Caco-2 (cell line): ENCODE measurements at regions of chr6 and their contacts with region 1.

Region 1: GRCh38 chr6:50655848-50656453 is 57.4 kb upstream of the TFAP2D start:
- DNase-seq: peak in 1 of 2 experiments; percentile 18
- H3K4me3 ChIP-seq: no peak overlapping the region
- H3K4me3 Mint-ChIP-seq: no peak overlapping the region
- H3K27ac Mint-ChIP-seq: no peak overlapping the region
- H3K4me1 ChIP-seq: no peaks in the 10 kb centered on the region
- H3K4me1 Mint-ChIP-seq: no peaks in the 10 kb centered on the region
- H3K27me3 ChIP-seq: no peaks in the 10 kb centered on the region
- H3K27me3 Mint-ChIP-seq: peaks cover 2% of the 10 kb centered on the region
- CTCF ChIP-seq: peak; percentile 49 to 70

Region 2: GRCh38 chr6:50791900-50792508 is 136.1 kb after region 1 on chr6:
- CTCF ChIA-PET with region 1: no interaction called
- POLR2A ChIA-PET with region 1: no interaction called
- intact Hi-C with region 1: loop called (anchors 1 kb)
- DNase-seq: peak in 1 of 2 experiments; percentile 47
- H3K4me3 ChIP-seq: no peak overlapping the region
- H3K4me3 Mint-ChIP-seq: no peak overlapping the region
- H3K27ac Mint-ChIP-seq: no peak overlapping the region
- H3K4me1 ChIP-seq: no peaks in the 10 kb centered on the region
- H3K4me1 Mint-ChIP-seq: no peaks in the 10 kb centered on the region
- H3K27me3 ChIP-seq: no peaks in the 10 kb centered on the region
- H3K27me3 Mint-ChIP-seq: peaks cover 11% of the 10 kb centered on the region
- CTCF ChIP-seq: peak; percentile 66 to 87